ENCODE measurements at regions of chr6 and their contacts with region 1.

Region 1: DNA sequence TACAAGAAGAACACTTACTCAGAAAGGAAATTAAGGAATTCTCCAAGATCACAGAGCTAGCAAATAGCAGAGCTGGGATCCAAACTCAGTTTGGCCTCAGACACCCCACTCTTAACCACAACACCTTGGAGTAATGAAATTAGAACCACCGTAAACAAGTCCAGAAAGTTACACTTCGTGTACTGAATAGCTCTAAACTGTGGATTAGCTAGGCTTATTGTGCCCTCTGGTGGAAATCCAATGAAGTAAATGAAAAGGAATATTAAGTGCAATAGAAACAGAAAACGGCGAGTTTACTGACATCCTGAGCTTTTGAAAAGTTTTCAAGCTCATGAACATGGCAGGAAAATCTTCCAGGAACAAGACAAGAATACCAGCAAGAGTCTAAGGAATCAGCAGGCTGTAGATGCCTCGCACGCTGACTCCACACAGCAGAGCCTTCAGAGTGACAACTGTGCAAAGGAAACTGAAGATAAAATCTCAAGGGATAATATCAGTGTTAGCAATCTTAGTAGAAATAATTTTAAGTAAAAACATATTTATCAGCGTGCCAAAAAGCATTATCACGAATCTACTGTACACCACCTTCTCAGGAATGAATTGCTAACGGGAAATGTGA is 34.6 kb downstream of the FBXO5 start:
- DNase-seq: peak; percentile 26
- H3K4me3 ChIP-seq: peak overlapping the region in 1 of 3 experiments; percentile 32
- H3K27ac ChIP-seq: no peak overlapping the region
- H3K4me1 ChIP-seq: peaks cover 13% of the 10 kb centered on the region
- H3K27me3 ChIP-seq: no peaks in the 10 kb centered on the region
- CTCF ChIP-seq: peak; percentile 63 to 65

Region 2: GRCh38 chr6:152386131-152386530 is 562.1 kb before region 1 on chr6:
- CTCF ChIA-PET with region 1: no interaction called
- dilution Hi-C with region 1: no loop called
- in situ Hi-C with region 1: no loop called
- intact Hi-C with region 1: no loop called
- DNase-seq: no peak
- H3K4me3 ChIP-seq: no peak overlapping the region
- H3K27ac ChIP-seq: no peak overlapping the region
- H3K4me1 ChIP-seq: peaks cover 6% of the 10 kb centered on the region
- H3K27me3 ChIP-seq: no peaks in the 10 kb centered on the region
- CTCF ChIP-seq: no peak

Region 3: GRCh38 chr6:152484806-152485205 is 463.5 kb before region 1 on chr6:
- CTCF ChIA-PET with region 1: no interaction called
- dilution Hi-C with region 1: no loop called
- in situ Hi-C with region 1: no loop called
- intact Hi-C with region 1: loop called (anchors 10 kb)
- DNase-seq: no peak
- H3K4me3 ChIP-seq: no peak overlapping the region
- H3K27ac ChIP-seq: no peak overlapping the region
- H3K4me1 ChIP-seq: no peaks in the 10 kb centered on the region
- H3K27me3 ChIP-seq: no peaks in the 10 kb centered on the region
- CTCF ChIP-seq: no peak

Region 4: DNA sequence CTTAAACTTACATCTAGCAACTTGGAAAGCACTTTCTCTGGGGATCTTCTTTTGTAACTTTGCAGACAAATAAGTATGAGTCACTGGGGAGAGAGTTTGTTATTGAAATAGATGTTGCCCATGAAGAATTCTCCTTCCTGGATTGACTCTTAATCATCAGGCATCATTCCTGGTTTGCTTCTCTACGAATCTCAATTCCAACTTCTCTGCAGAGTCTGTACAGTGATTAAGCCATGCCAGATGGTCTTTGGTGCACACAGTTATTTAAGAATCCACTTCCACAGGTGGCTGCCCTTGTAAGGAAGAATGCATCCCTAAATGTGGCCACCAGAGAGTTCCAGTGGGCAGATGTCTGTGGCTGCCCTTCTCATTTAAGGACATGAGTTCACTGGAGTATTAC is 224.9 kb before region 1 on chr6:
- CTCF ChIA-PET with region 1: interaction called, 5 read pairs
- dilution Hi-C with region 1: no loop called
- in situ Hi-C with region 1: loop called in 1 of 2 experiments (anchors 25 kb)
- intact Hi-C with region 1: loop called (anchors 5 kb)
- DNase-seq: peak; percentile 7
- H3K4me3 ChIP-seq: no peak overlapping the region
- H3K27ac ChIP-seq: no peak overlapping the region
- H3K4me1 ChIP-seq: no peaks in the 10 kb centered on the region
- H3K27me3 ChIP-seq: no peaks in the 10 kb centered on the region
- CTCF ChIP-seq: no peak

Region 5: GRCh38 chr6:152863618-152864326 is 84.5 kb before region 1 on chr6:
- CTCF ChIA-PET with region 1: no interaction called
- dilution Hi-C with region 1: no loop called
- in situ Hi-C with region 1: no loop called
- intact Hi-C with region 1: loop called (anchors 1 kb)
- DNase-seq: peak; percentile 51
- H3K4me3 ChIP-seq: no peak overlapping the region
- H3K27ac ChIP-seq: no peak overlapping the region
- H3K4me1 ChIP-seq: no peaks in the 10 kb centered on the region
- H3K27me3 ChIP-seq: peaks cover 3% of the 10 kb centered on the region
- CTCF ChIP-seq: peak; percentile 60 to 63

Region 6: GRCh38 chr6:152916035-152916434 is 32.2 kb before region 1 on chr6:
- CTCF ChIA-PET with region 1: no interaction called
- dilution Hi-C with region 1: no loop called
- in situ Hi-C with region 1: no loop called
- intact Hi-C with region 1: no loop called
- DNase-seq: no peak
- H3K4me3 ChIP-seq: no peak overlapping the region
- H3K27ac ChIP-seq: no peak overlapping the region
- H3K4me1 ChIP-seq: no peaks in the 10 kb centered on the region
- H3K27me3 ChIP-seq: peaks cover 1% of the 10 kb centered on the region
- CTCF ChIP-seq: no peak

Region 7: DNA sequence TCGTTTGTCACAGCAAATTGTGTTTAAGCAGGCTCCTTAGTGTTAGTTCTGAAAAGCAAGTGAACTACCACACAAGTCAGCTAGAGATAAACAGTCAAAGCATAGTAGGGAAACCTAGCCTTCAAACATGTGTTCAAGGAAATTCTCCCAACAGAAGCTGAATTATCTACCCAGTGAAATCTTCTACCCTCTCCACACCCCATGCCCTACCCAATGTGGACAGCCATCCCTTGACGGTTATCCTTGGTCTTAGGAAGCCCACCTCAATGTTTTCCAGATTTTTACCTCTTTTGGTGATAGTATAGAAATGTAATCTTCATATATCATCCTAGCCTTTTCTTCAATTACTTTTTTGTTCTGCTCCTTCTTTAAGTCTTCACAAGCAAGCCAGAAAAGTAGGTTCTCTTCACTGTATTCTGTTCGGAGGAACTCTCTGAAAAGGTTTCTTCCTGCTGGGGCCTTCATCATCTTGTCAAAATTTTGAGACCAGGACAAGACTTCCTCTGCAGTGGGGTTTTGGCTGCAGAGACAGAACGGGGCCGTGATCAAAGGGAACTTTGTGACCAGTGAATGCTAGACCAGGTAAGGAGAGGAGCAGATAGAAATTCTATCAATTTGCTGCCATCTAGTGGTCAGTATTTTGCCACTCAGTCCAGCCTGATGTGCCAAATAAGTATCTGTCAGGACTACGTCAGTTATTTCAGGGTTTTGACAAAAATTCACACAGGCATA is 75.9 kb after region 1 on chr6:
- CTCF ChIA-PET with region 1: no interaction called
- dilution Hi-C with region 1: no loop called
- in situ Hi-C with region 1: no loop called
- intact Hi-C with region 1: loop called (anchors 1 kb)
- DNase-seq: peak; percentile 54
- H3K4me3 ChIP-seq: no peak overlapping the region
- H3K27ac ChIP-seq: no peak overlapping the region
- H3K4me1 ChIP-seq: no peaks in the 10 kb centered on the region
- H3K27me3 ChIP-seq: no peaks in the 10 kb centered on the region
- CTCF ChIP-seq: peak; percentile 78 to 79